Uterus (tissue), 4 donors: ENCODE measurements at regions of chr2 and their contacts with region 1.

Region 1: GRCh38 chr2:230712443-230713330 is at the start of gene CAB39:
- DNase-seq: peak; percentile 76 to 87
- H3K4me3 ChIP-seq: peak within 1 kb of the TSS; percentile 43 to 97
- H3K27ac ChIP-seq: peak within 1 kb of the TSS; percentile 87 to 90
- H3K4me1 ChIP-seq: peaks cover 5 to 7% of the 10 kb centered on the region in 2 donors
- H3K27me3 ChIP-seq: no peaks in the 10 kb centered on the region
- CTCF ChIP-seq: peak; percentile 61 to 97 (median 95)
- POLR2A ChIP-seq: peak; percentile 71 to 91
- total RNA-seq, gene CAB39: 33.6 to 121 (median 78.0) TPM

Region 2: GRCh38 chr2:230798769-230799399 is 86.2 kb after region 1 on chr2:
- intact Hi-C with region 1: loop called (anchors 10 kb)
- DNase-seq: no peak
- H3K4me3 ChIP-seq: no peak overlapping the region
- H3K27ac ChIP-seq: no peak overlapping the region
- H3K4me1 ChIP-seq: no peaks in the 10 kb centered on the region
- H3K27me3 ChIP-seq: no peaks in the 10 kb centered on the region
- CTCF ChIP-seq: peak; percentile 46 to 62 (median 56)
- POLR2A ChIP-seq: no peak

Region 3: GRCh38 chr2:230991598-230991997 is 278.9 kb after region 1 on chr2:
- intact Hi-C with region 1: no loop called
- DNase-seq: no peak
- H3K4me3 ChIP-seq: no peak overlapping the region
- H3K27ac ChIP-seq: no peak overlapping the region
- H3K4me1 ChIP-seq: no peaks in the 10 kb centered on the region
- H3K27me3 ChIP-seq: no peaks in the 10 kb centered on the region
- CTCF ChIP-seq: no peak
- POLR2A ChIP-seq: no peak